T-cell (primary cell): ENCODE measurements at regions of chr2 and their contacts with region 1.

Region 1: DNA sequence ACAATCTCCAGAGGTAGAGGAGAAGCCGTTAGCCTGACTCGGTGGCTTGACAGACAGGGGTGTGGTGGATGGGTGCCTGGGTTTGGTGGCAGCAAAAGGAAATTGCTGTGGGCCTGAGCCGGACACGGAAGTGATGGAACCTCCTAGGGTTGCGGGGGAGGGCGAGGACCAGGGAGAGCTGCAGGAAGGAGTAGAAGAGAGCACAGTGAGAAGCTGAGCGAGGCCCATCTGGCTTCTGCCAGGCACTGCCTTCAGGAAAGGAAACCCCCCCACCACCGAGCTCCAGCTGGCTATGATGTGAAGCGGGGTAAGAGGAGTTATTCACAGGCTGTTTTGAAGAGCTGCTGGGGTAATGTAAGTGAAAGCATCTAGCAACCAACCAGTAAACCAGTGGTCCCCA is 134.6 kb downstream of the TSN start:
- DNase-seq: no peak
- ATAC-seq: no peak
- H3K4me3 ChIP-seq: no peak overlapping the region
- H3K4me3 Mint-ChIP-seq: no peak overlapping the region
- H3K27ac ChIP-seq: no peak overlapping the region
- H3K27ac Mint-ChIP-seq: no peak overlapping the region
- H3K4me1 ChIP-seq: no peaks in the 10 kb centered on the region
- H3K4me1 Mint-ChIP-seq: no peaks in the 10 kb centered on the region
- H3K27me3 ChIP-seq: peaks cover 0 to 5% of the 10 kb centered on the region in 2 experiments
- H3K27me3 Mint-ChIP-seq: peaks cover 11 to 14% of the 10 kb centered on the region in 2 donors

Region 2: GRCh38 chr2:121925466-121925865 is 35.4 kb after region 1 on chr2:
- CTCF ChIA-PET with region 1: interaction called in 1 of 2 experiments, 17 read pairs
- POLR2A ChIA-PET with region 1: no interaction called
- DNase-seq: no peak
- ATAC-seq: no peak
- H3K4me3 ChIP-seq: no peak overlapping the region
- H3K4me3 Mint-ChIP-seq: no peak overlapping the region
- H3K27ac ChIP-seq: no peak overlapping the region
- H3K27ac Mint-ChIP-seq: no peak overlapping the region
- H3K4me1 ChIP-seq: no peaks in the 10 kb centered on the region
- H3K4me1 Mint-ChIP-seq: no peaks in the 10 kb centered on the region
- H3K27me3 ChIP-seq: no peaks in the 10 kb centered on the region
- H3K27me3 Mint-ChIP-seq: peaks cover 6 to 8% of the 10 kb centered on the region in 2 donors